ENCODE measurements at regions of chrX and their contacts with region 1.

Region 1: GRCh38 chrX:30570505-30570904 is 7.1 kb downstream of the TASL start:
- DNase-seq: peak in 2 of 3 donors; percentile 34 to 54
- H3K4me3 ChIP-seq: peak overlapping the region in 1 of 3 experiments; percentile 31
- H3K4me3 Mint-ChIP-seq: peak overlapping the region in 1 of 2 donors; percentile 65
- H3K27ac ChIP-seq: peak overlapping the region; percentile 42 to 66
- H3K27ac Mint-ChIP-seq: peak overlapping the region; percentile 86 to 94 (median 90)
- H3K4me1 ChIP-seq: peaks cover 43 to 77% of the 10 kb centered on the region in 2 donors
- H3K4me1 Mint-ChIP-seq: peaks cover 37% of the 10 kb centered on the region
- H3K27me3 ChIP-seq: no peaks in the 10 kb centered on the region
- H3K27me3 Mint-ChIP-seq: peaks cover 0 to 9% (median 0%) of the 10 kb centered on the region in 3 donors
- CTCF ChIP-seq: peak; percentile 73

Region 2: DNA sequence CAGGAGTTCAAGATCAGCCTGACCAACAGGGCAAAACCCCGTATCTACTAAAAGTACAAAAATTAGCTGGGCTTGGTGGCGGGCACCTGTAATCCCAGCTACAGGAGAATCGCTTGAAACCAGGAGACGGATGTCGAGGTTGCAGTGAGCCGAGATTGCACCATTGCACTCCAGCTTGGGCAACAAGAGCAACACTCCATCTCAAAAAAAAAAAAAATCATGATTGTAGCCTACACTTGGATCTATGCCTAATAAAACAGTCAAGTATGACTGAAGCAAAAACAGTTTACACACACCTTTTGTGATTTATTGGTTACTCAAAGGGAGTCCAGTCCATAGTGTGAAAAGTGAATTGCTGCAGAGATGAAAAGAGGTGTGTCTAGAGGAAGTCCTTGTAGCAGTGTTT is 41.7 kb after region 1 on chrX:
- intact Hi-C with region 1: loop called in 1 of 2 experiments (anchors 5 kb)
- DNase-seq: peak in 2 of 3 donors; percentile 11 to 31
- H3K4me3 ChIP-seq: peak overlapping the region; percentile 17 to 62 (median 52)
- H3K4me3 Mint-ChIP-seq: peak overlapping the region; percentile 74 to 84
- H3K27ac ChIP-seq: peak overlapping the region; percentile 59 to 92
- H3K27ac Mint-ChIP-seq: peak overlapping the region; percentile 94 to 96 (median 95)
- H3K4me1 ChIP-seq: peaks cover 27 to 34% of the 10 kb centered on the region in 2 donors
- H3K4me1 Mint-ChIP-seq: peaks cover 22% of the 10 kb centered on the region
- H3K27me3 ChIP-seq: no peaks in the 10 kb centered on the region
- H3K27me3 Mint-ChIP-seq: peaks cover 0 to 2% (median 0%) of the 10 kb centered on the region in 3 donors
- CTCF ChIP-seq: no peak

Region 3: GRCh38 chrX:30620980-30621618 is 50.6 kb after region 1 on chrX:
- intact Hi-C with region 1: loop called in 1 of 2 experiments (anchors 10 kb)
- DNase-seq: peak; percentile 84 to 88 (median 87)
- H3K4me3 ChIP-seq: peak overlapping the region in 1 of 3 experiments; percentile 24
- H3K4me3 Mint-ChIP-seq: peak overlapping the region; percentile 39 to 67
- H3K27ac ChIP-seq: peak overlapping the region; percentile 69 to 72
- H3K27ac Mint-ChIP-seq: peak overlapping the region; percentile 96 to 98 (median 96)
- H3K4me1 ChIP-seq: peaks cover 32 to 41% of the 10 kb centered on the region in 2 donors
- H3K4me1 Mint-ChIP-seq: peaks cover 34% of the 10 kb centered on the region
- H3K27me3 ChIP-seq: peaks cover 0 to 2% of the 10 kb centered on the region in 2 donors
- H3K27me3 Mint-ChIP-seq: peaks cover 0 to 7% (median 0%) of the 10 kb centered on the region in 3 donors
- CTCF ChIP-seq: no peak

Region 4: DNA sequence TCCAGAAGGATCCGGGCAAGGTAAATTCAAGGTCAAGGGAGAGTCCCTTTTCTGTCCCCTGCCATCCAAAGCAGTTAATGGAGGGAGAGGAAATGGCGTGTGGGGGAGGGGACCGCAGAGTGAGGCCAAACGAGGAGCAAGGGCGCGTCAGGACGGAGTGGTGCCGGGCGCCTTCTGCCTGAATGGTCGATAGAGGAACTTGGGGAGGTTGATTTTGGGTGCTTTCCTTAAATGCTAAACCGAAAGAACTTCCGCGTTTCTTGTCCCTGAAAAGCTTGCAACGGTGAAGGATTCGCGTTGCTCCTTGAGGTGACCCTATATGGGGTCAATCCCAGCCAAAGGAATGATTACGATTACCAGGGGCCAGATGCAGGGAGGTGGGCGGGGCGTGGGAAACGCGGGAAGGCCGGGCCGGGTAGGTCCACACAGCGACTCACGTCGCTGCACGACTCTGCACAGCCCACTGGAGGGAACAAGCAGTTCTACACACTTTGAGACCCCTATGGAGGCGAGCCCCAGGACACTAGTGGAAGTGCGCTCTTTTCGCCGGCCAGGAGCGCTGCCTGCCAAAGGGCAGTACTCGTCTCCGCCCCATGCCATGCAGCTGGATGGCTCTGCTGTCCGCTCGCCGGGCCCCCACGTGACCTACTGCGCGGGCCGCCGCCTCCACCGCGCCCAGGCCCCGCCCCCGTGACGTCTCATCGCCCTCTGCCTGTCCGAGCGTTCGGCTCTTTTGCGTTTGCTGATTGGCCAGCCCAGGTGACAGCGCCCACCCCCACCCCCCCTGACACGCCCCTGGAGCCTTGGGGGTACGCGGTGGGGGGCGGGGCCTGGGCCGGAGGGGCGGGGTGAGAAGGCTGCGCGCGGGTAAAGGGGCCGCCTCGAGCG is 82.3 kb after region 1 on chrX:
- intact Hi-C with region 1: loop called (anchors 10 kb)
- DNase-seq: peak; percentile 89 to 95 (median 94)
- H3K4me3 ChIP-seq: peak overlapping the region; percentile 26 to 78 (median 64)
- H3K4me3 Mint-ChIP-seq: peak overlapping the region; percentile 90 to 91
- H3K27ac ChIP-seq: peak overlapping the region; percentile 99
- H3K27ac Mint-ChIP-seq: peak overlapping the region; percentile 95 to 99 (median 98)
- H3K4me1 ChIP-seq: peaks cover 40 to 44% of the 10 kb centered on the region in 2 donors
- H3K4me1 Mint-ChIP-seq: peaks cover 38% of the 10 kb centered on the region
- H3K27me3 ChIP-seq: peaks cover 0 to 8% of the 10 kb centered on the region in 2 donors
- H3K27me3 Mint-ChIP-seq: peaks cover 0 to 32% (median 0%) of the 10 kb centered on the region in 3 donors
- CTCF ChIP-seq: no peak

Region 5: GRCh38 chrX:30957753-30958152 is 387.2 kb after region 1 on chrX:
- intact Hi-C with region 1: no loop called
- DNase-seq: no peak
- H3K4me3 ChIP-seq: no peak overlapping the region
- H3K4me3 Mint-ChIP-seq: no peak overlapping the region
- H3K27ac ChIP-seq: no peak overlapping the region
- H3K27ac Mint-ChIP-seq: no peak overlapping the region
- H3K4me1 ChIP-seq: no peaks in the 10 kb centered on the region
- H3K4me1 Mint-ChIP-seq: peaks cover 2% of the 10 kb centered on the region
- H3K27me3 ChIP-seq: no peaks in the 10 kb centered on the region
- H3K27me3 Mint-ChIP-seq: peaks cover 0 to 2% (median 0%) of the 10 kb centered on the region in 3 donors
- CTCF ChIP-seq: no peak